Activated CD4-positive, alpha-beta T cell treated with anti-CD3 and anti-CD28 coated beads, Interleukin-2, amount 10 ng/mL, durations not matched to agents 24 days and 14 days (primary cell): ENCODE measurements at regions of chr10 and their contacts with region 1.

Region 1: DNA sequence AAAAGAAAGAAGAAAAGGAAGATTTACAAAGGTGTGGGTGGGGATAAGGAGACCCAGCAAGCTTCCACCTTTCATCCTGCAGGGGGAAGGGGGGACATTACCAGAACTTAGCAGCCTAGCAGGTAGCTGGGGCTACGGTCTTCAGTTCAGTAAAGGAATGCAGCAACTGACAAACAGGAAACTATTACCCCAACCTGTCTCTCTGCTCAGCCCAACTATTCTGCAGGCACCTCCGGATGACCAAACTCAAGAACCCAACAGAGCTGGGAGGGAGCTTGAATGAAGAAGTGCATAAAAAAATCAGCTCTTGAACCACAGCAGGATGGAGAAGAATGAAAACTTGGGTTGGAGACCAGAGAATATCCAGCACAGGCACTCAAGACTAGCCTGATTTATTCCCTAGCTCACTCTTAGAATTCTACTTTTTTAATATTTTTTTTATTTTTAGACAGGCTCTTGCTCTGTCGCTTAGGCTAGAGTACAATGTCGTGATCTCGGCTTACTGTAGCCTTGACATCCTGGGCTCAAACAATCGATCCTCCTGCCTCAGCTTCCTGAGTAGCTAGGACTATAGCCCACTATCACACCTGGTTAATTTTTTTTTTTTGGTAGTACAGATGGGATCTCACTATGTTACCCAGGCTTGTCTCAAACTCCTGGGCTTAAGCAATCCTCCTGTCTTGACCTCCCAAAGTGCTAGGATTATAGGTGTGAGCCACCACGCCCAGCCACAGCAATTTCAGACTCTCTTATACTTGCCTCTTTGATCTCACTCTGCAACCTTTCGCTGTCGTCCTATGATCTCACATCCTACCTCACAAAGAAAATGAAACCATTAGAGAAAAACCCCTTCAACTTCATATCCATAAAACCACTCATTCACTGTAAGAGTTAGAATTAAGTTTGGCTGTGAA is 18.5 kb upstream of the C10orf67 start:
- DNase-seq: peak; percentile 87
- H3K4me3 Mint-ChIP-seq: peak overlapping the region; percentile 72
- H3K27ac Mint-ChIP-seq: peak overlapping the region; percentile 94
- H3K4me1 Mint-ChIP-seq: peaks cover 50% of the 10 kb centered on the region
- H3K27me3 Mint-ChIP-seq: no peaks in the 10 kb centered on the region

Region 2: DNA sequence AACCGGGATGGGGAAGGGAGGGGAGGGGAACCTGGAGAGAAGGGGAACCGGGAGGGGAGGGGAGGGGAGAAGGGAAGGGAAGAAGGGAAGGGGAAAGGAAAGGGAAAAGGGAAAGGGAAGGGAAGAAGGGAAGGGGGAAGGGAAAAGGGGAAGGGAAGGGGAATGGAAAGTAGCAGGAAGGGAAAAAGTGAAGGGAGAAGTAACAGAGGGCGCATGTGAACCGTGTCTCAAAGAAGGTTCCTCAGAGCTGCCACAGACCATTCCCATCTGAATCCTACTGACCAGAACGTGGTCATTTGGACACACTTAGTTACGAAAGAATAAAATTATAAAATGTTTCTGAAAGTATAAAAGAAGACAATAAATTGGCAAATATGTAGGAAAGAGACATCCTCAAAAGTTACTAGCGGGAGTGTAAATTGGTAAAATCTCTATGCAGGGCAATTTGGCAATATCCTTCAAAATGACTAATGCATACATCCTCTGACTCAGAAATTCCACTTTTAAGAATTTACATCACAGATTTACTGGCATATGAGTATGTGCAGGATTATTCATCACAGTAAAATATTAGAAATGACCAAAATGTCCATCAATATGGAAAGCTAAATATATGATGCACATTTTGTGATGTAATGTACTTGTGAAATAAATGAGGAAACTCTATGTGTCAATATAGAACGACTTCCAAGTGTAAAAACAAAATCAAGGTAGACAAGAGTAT is 31.4 kb before region 1 on chr10:
- intact Hi-C with region 1: loop called (anchors 1 kb)
- DNase-seq: peak; percentile 43
- H3K4me3 Mint-ChIP-seq: no peak overlapping the region
- H3K27ac Mint-ChIP-seq: peak overlapping the region; percentile 10
- H3K4me1 Mint-ChIP-seq: peaks cover 18% of the 10 kb centered on the region
- H3K27me3 Mint-ChIP-seq: no peaks in the 10 kb centered on the region

Region 3: GRCh38 chr10:23344241-23344841 is 18.8 kb before region 1 on chr10 and contains the start of gene C10orf67:
- intact Hi-C with region 1: loop called (anchors 2 kb)
- DNase-seq: peak; percentile 76
- H3K4me3 Mint-ChIP-seq: peak within 1 kb of the TSS; percentile 93
- H3K27ac Mint-ChIP-seq: peak within 1 kb of the TSS; percentile 87
- H3K4me1 Mint-ChIP-seq: peaks cover 35% of the 10 kb centered on the region
- H3K27me3 Mint-ChIP-seq: no peaks in the 10 kb centered on the region
- total RNA-seq, gene C10orf67: 0.07 and 0.16 TPM in 2 replicates

Region 4: GRCh38 chr10:23412223-23412622 is 49.1 kb after region 1 on chr10:
- intact Hi-C with region 1: loop called (anchors 1 kb)
- DNase-seq: no peak
- H3K4me3 Mint-ChIP-seq: peak overlapping the region; percentile 30
- H3K27ac Mint-ChIP-seq: peak overlapping the region; percentile 83
- H3K4me1 Mint-ChIP-seq: peaks cover 19% of the 10 kb centered on the region
- H3K27me3 Mint-ChIP-seq: no peaks in the 10 kb centered on the region

Region 5: GRCh38 chr10:23438550-23439441 is 75.7 kb after region 1 on chr10 and contains the start of gene OTUD1:
- intact Hi-C with region 1: loop called (anchors 2 kb)
- DNase-seq: peak; percentile 99
- H3K4me3 Mint-ChIP-seq: peak within 1 kb of the TSS; percentile 96
- H3K27ac Mint-ChIP-seq: peak within 1 kb of the TSS; percentile 86
- H3K4me1 Mint-ChIP-seq: peaks cover 39% of the 10 kb centered on the region
- H3K27me3 Mint-ChIP-seq: no peaks in the 10 kb centered on the region
- total RNA-seq, gene OTUD1: 12.6 and 12.8 TPM in 2 replicates

Region 6: DNA sequence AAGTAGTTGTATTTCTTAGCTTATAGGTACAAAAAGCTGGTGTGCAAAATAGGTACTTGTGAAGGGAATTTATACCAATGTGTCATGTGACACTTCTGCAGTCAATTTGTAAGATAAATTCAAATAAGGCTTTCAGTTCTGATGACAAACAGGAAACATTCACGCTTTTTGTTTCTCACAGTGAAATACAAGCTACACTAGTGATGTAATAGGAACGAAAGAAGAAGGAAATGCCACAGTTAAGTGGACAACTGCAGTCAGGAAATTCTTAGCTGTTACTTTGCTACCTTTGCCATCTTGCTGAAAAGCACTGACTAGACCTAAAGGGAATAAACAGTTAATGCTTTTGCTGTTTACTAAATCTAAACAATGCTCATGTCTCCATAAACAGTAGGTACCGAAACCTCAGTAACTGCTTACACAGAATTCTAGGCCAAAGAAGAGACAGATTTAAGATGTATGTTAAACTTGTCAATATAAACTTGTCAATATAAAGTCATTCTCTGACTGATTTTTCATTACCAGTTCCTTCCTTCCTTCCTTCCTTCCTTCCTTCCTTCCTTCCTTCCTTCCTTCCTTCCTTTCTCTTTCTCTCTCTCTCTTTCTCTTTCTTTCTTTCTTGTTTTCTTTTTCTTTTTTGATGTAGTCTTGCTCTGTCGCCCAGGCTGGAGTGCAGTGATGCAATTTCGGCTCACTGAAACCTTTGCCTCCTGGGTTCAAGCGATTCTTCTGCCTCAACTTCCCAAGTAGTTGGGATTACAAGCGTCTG is 85.8 kb after region 1 on chr10:
- intact Hi-C with region 1: loop called (anchors 2 kb)
- DNase-seq: no peak
- H3K4me3 Mint-ChIP-seq: peak overlapping the region; percentile 55
- H3K27ac Mint-ChIP-seq: peak overlapping the region; percentile 91
- H3K4me1 Mint-ChIP-seq: peaks cover 28% of the 10 kb centered on the region
- H3K27me3 Mint-ChIP-seq: no peaks in the 10 kb centered on the region

Region 7: DNA sequence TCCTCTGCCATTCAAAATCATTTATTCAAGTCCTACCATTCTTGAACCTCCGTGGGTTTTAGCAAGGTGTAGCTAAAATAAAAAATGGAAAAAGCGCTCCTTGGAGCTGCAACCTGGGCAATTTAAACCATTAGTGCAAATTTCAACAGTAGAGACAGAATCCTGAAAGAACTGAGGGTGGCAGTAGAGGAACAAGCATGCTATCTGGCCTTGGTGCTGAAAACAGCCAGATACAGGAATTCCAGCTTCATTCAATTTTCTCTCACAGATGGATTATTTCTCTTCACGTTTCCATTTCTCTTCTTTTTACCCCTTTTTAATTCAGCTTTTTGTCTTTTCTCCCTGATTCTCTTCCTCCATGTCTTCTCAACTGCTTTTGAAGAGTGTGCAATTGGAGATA is 153.4 kb after region 1 on chr10:
- intact Hi-C with region 1: loop called (anchors 1 kb)
- DNase-seq: peak; percentile 55
- H3K4me3 Mint-ChIP-seq: no peak overlapping the region
- H3K27ac Mint-ChIP-seq: no peak overlapping the region
- H3K4me1 Mint-ChIP-seq: peaks cover 14% of the 10 kb centered on the region
- H3K27me3 Mint-ChIP-seq: peaks cover 10% of the 10 kb centered on the region